ENCODE measurements at regions of chr7 and their contacts with region 1.

Region 1: DNA sequence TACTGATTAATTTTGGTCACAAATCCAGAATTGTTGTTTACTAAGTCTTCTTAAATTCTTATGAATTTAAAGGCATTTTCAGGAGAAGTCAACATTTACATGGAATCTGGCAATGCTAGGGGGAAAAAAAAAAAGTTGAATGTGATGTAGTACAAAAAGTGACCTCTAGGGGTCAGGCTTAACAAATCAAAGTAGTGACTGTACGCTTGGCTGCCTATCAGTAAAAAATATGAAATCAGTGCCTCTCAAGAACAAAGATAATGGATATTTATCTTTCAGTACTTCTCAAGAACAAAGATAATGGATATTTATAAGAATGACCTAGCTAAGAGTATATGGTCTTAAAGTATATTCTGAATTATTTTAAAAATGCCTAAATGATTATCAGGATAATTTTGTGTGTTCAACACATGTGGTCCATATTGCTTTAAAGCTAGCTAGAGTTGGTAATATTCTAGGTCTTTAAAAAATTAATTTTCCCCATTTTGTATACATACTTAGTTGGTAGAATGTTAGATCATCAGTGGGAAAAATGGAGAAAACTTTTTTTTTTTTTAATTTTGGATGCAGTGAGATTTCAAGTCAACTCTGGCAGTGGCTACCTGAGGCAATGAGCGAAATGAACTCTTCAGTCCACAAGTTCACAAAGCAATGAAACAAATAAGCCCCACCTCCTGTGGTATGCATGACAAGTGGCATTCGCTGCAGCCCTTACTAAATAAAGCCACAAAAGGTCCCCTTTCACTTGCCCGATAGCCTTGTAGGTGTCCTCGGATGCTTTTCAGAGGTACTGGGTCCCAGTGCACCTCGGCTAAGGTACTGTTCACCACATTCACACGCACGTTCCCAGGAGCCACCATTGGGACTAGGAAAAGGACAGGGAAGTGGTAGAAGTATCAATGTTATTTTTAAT is 51.2 kb upstream of the LAMB4 start:
- DNase-seq: no peak
- H3K4me3 ChIP-seq: no peak overlapping the region
- H3K27ac ChIP-seq: no peak overlapping the region
- H3K4me1 ChIP-seq: no peaks in the 10 kb centered on the region
- H3K27me3 ChIP-seq: no peaks in the 10 kb centered on the region
- CTCF ChIP-seq: peak; percentile 65 to 79 (median 70)
- EP300 ChIP-seq: no peak
- POLR2A ChIP-seq: no peak

Region 2: DNA sequence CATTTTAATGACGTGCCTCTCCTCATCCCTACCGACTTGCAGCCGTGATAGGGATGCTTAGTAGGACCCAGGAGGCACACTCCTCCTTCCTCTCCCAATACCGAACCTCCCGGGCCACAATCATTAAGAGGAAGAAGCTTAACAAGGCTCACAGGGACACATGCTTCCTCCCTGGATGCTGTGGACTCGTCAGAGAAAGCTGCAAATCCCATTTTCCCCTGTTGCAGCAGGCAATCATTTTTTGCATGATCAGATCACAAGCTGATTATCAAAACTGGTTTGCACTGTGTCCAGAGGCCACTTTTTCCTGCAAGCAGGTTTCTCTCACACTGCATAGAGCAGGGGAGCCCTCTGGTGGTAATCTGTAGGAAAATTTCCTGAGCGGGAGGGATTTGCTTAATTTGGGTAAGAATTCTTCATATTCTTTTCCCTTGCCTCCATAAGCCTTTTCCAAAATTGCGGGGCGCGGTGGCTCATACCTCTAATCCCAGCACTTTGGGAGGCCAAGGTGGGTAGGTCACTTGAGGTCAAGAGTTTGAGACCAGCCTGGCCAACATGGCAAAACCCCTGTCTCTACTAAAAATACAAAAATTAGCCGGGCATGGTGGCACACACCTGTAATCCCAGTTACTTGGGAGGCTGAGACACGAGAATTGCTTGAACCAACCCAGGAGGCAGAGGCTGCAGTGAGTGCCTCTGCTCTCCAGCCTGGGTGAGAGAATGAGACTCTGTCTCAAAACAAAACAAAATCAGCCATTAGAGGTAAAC is 35.1 kb before region 1 on chr7:
- in situ Hi-C with region 1: no loop called
- intact Hi-C with region 1: no loop called
- DNase-seq: peak; percentile 63
- H3K4me3 ChIP-seq: no peak overlapping the region
- H3K27ac ChIP-seq: no peak overlapping the region
- H3K4me1 ChIP-seq: peaks cover 0 to 6% (median 2%) of the 10 kb centered on the region in 4 donors
- H3K27me3 ChIP-seq: no peaks in the 10 kb centered on the region
- CTCF ChIP-seq: peak; percentile 85 to 89 (median 87)
- EP300 ChIP-seq: no peak
- POLR2A ChIP-seq: no peak

Region 3: GRCh38 chr7:108156897-108157602 is 24.3 kb before region 1 on chr7:
- in situ Hi-C with region 1: no loop called
- intact Hi-C with region 1: no loop called
- DNase-seq: no peak
- H3K4me3 ChIP-seq: no peak overlapping the region
- H3K27ac ChIP-seq: no peak overlapping the region
- H3K4me1 ChIP-seq: no peaks in the 10 kb centered on the region
- H3K27me3 ChIP-seq: no peaks in the 10 kb centered on the region
- CTCF ChIP-seq: no peak
- EP300 ChIP-seq: no peak
- POLR2A ChIP-seq: no peak

Region 4: GRCh38 chr7:108503112-108504026 is 322.0 kb after region 1 on chr7:
- in situ Hi-C with region 1: loop called (anchors 5 to 25 kb)
- intact Hi-C with region 1: loop called (anchors 5 kb)
- DNase-seq: no peak
- H3K4me3 ChIP-seq: no peak overlapping the region
- H3K27ac ChIP-seq: peak overlapping the region in 1 of 4 donors; percentile 26
- H3K4me1 ChIP-seq: no peaks in the 10 kb centered on the region
- H3K27me3 ChIP-seq: no peaks in the 10 kb centered on the region
- CTCF ChIP-seq: no peak
- EP300 ChIP-seq: no peak
- POLR2A ChIP-seq: no peak

Measured in transverse colon (tissue), 4 donors.